ENCODE measurements at regions of chr20 and their contacts with region 1.

Region 1: GRCh38 chr20:53900380-53900999 is 169.9 kb downstream of the BCAS1 start:
- DNase-seq: no peak

Region 2: GRCh38 chr20:53813636-53814429 is 86.7 kb before region 1 on chr20:
- CTCF ChIA-PET with region 1: no interaction called
- POLR2A ChIA-PET with region 1: no interaction called
- DNase-seq: no peak

Region 3: DNA sequence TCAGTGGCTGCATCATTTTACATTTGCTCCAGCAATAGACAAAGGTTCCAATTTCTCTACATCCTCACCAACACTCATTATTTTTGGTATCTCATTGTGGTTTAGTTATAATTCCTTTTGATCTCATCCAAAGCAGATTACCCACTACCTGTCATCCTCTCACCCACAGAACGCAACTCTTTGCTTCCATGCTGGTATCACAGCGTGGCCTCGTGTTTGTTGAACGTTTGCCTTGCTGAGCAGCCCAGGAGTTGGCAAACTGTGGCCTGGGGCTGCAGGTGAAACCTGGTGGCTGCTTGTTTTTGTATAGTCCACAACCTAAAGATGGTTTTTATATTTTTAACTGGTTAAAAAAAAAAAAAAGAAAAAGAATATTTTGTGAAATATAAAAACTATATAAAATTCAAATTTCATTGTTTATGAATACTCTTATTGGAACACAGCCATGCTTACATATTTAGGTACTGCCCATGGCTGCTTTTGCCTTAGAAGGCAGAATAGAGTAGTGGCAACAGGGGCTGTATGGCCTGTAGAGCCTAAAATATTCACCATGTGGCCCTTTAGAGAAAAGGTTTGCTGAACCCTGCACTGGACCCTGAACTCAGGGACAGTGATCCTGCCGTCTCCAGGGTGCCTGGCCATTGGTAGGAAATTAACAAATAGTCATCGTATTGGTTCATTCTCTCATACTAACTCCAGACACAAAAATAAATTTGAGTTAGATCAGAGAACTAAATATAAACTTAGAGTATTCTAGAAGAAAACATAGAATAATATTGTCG is 11.8 kb before region 1 on chr20:
- CTCF ChIA-PET with region 1: no interaction called
- POLR2A ChIA-PET with region 1: no interaction called
- DNase-seq: no peak

Region 4: DNA sequence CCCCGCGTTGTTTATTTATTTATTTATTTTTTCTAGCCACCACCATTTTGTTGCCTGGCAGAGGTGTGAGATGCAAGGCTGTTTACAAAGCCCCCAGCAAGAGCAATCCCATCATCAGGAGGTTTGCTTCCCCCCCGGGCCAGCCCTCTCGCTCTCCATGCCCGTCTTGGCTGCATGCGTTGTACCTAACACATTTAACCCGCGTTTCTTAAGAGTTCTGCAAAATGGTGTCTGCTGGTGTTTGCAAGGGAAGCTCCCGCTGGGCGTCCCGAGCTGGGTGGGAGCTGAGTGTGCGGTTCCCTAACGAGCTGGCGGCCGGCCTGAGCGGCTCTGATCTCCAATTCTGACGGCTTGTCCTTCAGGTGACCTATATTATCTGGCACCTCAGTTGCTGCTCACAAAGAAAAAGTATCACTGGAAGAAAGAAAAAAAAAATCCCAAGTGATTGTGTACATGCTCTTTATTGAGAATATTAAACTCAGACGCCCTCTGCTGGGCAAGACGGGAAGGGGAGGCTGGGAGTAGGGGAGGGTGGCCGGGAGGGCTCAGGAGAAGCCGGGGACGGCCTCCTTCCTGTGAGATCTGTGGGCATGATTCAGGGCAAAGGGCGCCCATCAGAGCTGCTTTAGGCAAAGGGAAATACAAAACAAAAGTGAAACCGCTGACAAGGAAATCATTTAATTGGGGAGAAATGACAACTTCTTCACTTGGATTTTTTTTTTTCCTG is 15.1 kb after region 1 on chr20:
- CTCF ChIA-PET with region 1: interaction called, 14 read pairs
- POLR2A ChIA-PET with region 1: interaction called, 5 read pairs
- DNase-seq: peak; percentile 81

Measured in HEK293T (cell line).